ENCODE measurements at regions of chr17 and their contacts with region 1.

Region 1: GRCh38 chr17:20063665-20064648 is 54.8 kb downstream of the SPECC1 start:
- DNase-seq: peak; percentile 66 to 96
- H3K4me3 ChIP-seq: peak overlapping the region in 1 of 2 donors; percentile 39
- H3K27ac ChIP-seq: peak overlapping the region; percentile 77 to 91
- H3K4me1 ChIP-seq: peaks cover 16 to 39% of the 10 kb centered on the region in 2 donors
- H3K27me3 ChIP-seq: no peaks in the 10 kb centered on the region
- CTCF ChIP-seq: no peak

Region 2: GRCh38 chr17:20009302-20010098 is 54.5 kb before region 1 on chr17 and contains the start of gene SPECC1:
- intact Hi-C with region 1: loop called (anchors 2 kb)
- DNase-seq: peak; percentile 50 to 93
- H3K4me3 ChIP-seq: peak within 1 kb of the TSS; percentile 74 to 85
- H3K27ac ChIP-seq: peak within 1 kb of the TSS; percentile 85 to 91
- H3K4me1 ChIP-seq: no peaks in the 10 kb centered on the region
- H3K27me3 ChIP-seq: no peaks in the 10 kb centered on the region
- CTCF ChIP-seq: peak in 1 of 3 experiments; percentile 99
- total RNA-seq, gene SPECC1: 76.4 TPM

Region 3: DNA sequence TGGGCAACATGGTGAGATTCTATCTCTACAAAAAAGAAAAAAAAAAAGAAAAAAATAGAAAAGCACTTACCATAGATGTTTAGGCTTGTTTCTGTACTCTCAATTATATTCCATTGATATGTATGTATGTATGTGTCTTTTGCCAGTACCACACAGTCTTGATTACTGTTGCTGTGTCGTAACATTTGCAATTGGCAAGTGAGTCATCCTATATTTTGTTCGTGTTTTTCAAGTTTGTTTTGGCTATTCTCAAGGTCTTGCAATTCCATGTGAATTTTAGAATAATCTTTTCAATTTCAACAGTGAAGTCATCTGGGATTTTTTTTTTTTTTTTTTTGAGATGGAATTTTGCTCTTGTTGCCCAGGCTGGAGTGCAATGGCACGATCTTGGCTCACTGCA is 35.5 kb before region 1 on chr17:
- intact Hi-C with region 1: loop called (anchors 5 kb)
- DNase-seq: no peak
- H3K4me3 ChIP-seq: no peak overlapping the region
- H3K27ac ChIP-seq: peak overlapping the region in 1 of 2 donors; percentile 47
- H3K4me1 ChIP-seq: peaks cover 0 to 5% of the 10 kb centered on the region in 2 donors
- H3K27me3 ChIP-seq: no peaks in the 10 kb centered on the region
- CTCF ChIP-seq: no peak